Activated CD8-positive, alpha-beta T cell treated with anti-CD3 and anti-CD28 coated beads for 36 hours (primary cell): ENCODE measurements at regions of chr14 and their contacts with region 1.

Region 1: GRCh38 chr14:60349663-60350365 is 100.8 kb downstream of the PPM1A start:
- DNase-seq: peak; percentile 42
- ATAC-seq: no peak
- H3K4me3 Mint-ChIP-seq: no peak overlapping the region
- H3K27ac Mint-ChIP-seq: no peak overlapping the region
- H3K4me1 Mint-ChIP-seq: no peaks in the 10 kb centered on the region
- H3K27me3 Mint-ChIP-seq: peaks cover 2% of the 10 kb centered on the region
- CTCF ChIP-seq: peak; percentile 72

Region 2: GRCh38 chr14:60339571-60339970 is 10.2 kb before region 1 on chr14:
- CTCF ChIA-PET with region 1: interaction called, 14 read pairs
- POLR2A ChIA-PET with region 1: no interaction called
- intact Hi-C with region 1: no loop called
- DNase-seq: no peak
- ATAC-seq: no peak
- H3K4me3 Mint-ChIP-seq: no peak overlapping the region
- H3K27ac Mint-ChIP-seq: no peak overlapping the region
- H3K4me1 Mint-ChIP-seq: no peaks in the 10 kb centered on the region
- H3K27me3 Mint-ChIP-seq: peaks cover 20% of the 10 kb centered on the region
- CTCF ChIP-seq: no peak

Region 3: DNA sequence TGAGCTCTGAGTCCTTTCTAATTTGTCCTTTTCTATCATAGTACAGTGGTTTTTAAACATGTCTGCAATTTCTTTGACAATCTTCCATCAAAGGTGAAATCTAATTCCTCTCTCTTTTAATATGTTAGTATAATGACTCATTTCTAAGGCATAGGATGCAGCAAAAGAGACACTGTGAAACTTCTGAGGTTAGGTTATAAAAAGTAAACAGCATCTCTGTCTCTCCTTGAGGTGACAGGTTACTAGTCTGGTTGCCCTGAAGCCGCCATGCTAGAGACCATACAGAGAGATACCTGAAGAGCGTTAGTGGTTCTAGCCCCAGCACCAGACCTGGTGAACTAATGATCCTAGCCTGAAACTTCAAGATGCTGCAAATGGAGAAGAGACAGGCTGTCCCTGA is 13.5 kb after region 1 on chr14:
- CTCF ChIA-PET with region 1: interaction called, 18 read pairs
- POLR2A ChIA-PET with region 1: no interaction called
- intact Hi-C with region 1: no loop called
- DNase-seq: no peak
- ATAC-seq: no peak
- H3K4me3 Mint-ChIP-seq: no peak overlapping the region
- H3K27ac Mint-ChIP-seq: no peak overlapping the region
- H3K4me1 Mint-ChIP-seq: no peaks in the 10 kb centered on the region
- H3K27me3 Mint-ChIP-seq: peaks cover 13% of the 10 kb centered on the region
- CTCF ChIP-seq: no peak

Region 4: DNA sequence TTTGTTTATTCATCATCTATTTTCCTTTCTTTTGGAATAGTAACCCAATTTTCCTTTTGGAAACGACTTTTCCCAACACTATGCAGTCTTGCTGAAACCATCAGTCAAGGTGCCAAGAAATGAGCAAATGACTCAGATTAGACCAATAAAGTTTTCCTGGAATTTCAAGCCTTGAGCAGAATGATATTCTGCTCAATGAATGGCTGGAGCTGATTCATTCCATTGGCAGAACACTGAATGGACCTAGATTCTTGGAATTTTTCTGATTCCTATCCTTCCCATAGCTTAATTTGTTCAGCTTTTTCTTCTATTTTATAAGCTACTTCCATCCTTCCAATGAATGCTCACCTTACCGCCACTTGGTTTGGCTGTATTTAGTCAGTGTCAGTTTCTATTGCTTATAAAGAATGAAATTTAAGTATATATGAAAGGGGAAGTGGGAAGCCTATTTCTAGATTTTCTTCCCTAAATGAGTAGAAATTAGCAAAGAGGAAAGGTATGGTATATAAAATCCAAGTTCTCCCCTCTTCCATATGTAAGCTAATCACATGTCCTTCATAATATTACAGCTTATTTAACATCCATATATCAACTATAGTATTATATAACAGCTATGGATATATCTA is 47.0 kb after region 1 on chr14:
- CTCF ChIA-PET with region 1: no interaction called
- POLR2A ChIA-PET with region 1: no interaction called
- intact Hi-C with region 1: no loop called
- DNase-seq: no peak
- ATAC-seq: no peak
- H3K4me3 Mint-ChIP-seq: no peak overlapping the region
- H3K27ac Mint-ChIP-seq: no peak overlapping the region
- H3K4me1 Mint-ChIP-seq: no peaks in the 10 kb centered on the region
- H3K27me3 Mint-ChIP-seq: peaks cover 8% of the 10 kb centered on the region
- CTCF ChIP-seq: no peak

Region 5: DNA sequence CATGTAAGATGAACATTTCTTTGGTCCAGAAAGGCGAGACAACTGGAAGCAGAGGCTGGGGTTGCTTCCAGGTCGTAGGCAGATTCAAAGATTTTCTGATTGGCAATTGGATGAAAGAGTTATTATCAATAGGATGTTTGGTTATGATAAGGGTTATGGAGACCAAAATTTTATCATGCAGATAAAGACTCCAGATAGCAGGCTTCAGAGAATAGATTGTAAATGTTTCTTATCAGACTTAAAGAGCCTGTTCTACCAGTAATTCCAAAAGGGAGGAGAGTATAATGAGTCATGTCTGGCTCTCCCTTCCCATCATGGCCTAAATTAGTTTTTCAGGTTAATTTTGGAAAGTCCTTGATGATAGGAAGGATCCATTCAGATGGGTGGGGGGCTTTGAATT is 80.5 kb after region 1 on chr14:
- CTCF ChIA-PET with region 1: no interaction called
- POLR2A ChIA-PET with region 1: no interaction called
- intact Hi-C with region 1: no loop called
- DNase-seq: no peak
- ATAC-seq: no peak
- H3K4me3 Mint-ChIP-seq: no peak overlapping the region
- H3K27ac Mint-ChIP-seq: no peak overlapping the region
- H3K4me1 Mint-ChIP-seq: no peaks in the 10 kb centered on the region
- H3K27me3 Mint-ChIP-seq: no peaks in the 10 kb centered on the region
- CTCF ChIP-seq: no peak

Region 6: GRCh38 chr14:60561845-60562746 is 212.3 kb after region 1 on chr14:
- CTCF ChIA-PET with region 1: interaction called, 24 read pairs
- POLR2A ChIA-PET with region 1: no interaction called
- intact Hi-C with region 1: loop called (anchors 5 kb)
- DNase-seq: peak; percentile 54
- ATAC-seq: no peak
- H3K4me3 Mint-ChIP-seq: no peak overlapping the region
- H3K27ac Mint-ChIP-seq: no peak overlapping the region
- H3K4me1 Mint-ChIP-seq: no peaks in the 10 kb centered on the region
- H3K27me3 Mint-ChIP-seq: peaks cover 3% of the 10 kb centered on the region
- CTCF ChIP-seq: peak; percentile 60

Region 7: DNA sequence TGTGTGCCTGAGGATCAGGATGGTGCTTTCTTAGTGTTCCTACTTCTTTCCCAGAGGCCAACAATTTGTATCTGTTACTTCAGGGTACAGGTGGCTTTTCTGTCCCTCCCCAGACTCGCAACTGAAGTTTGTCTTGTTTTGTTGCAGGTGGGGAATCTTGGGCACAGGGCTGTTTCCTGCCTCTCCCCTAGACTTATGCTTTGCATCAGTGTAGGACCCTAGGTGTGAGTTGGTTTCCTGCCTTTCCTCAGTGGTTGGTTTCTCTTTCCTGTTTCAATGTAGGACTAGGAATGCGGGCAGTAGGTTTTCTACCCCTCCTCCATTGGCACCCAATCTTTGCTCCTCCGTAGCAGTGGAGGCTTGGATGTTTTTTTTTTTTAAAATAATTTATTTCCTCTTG is 544.1 kb after region 1 on chr14:
- CTCF ChIA-PET with region 1: no interaction called
- POLR2A ChIA-PET with region 1: no interaction called
- intact Hi-C with region 1: no loop called
- DNase-seq: no peak
- ATAC-seq: no peak
- H3K4me3 Mint-ChIP-seq: no peak overlapping the region
- H3K27ac Mint-ChIP-seq: no peak overlapping the region
- H3K4me1 Mint-ChIP-seq: peaks cover 17% of the 10 kb centered on the region
- H3K27me3 Mint-ChIP-seq: no peaks in the 10 kb centered on the region
- CTCF ChIP-seq: no peak

Region 8: DNA sequence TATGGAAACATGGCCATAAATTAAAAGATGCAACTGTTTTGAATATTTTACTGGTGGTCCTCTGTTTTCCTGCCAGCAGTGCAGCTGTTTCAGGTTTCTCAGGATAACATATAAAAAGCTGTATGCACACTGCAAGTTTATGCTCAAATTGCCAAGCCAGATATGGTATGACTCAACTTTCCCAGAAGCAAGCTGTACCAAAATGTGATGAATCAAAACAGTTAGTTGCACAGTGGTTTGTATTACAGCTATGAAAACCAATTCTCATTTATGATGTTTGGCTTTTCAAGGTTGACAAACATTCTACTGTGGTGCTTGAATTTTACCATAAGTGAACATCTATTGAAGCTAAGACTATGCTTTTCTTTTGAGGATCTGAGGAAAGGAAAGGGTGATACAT is 615.6 kb after region 1 on chr14:
- CTCF ChIA-PET with region 1: no interaction called
- POLR2A ChIA-PET with region 1: no interaction called
- intact Hi-C with region 1: no loop called
- DNase-seq: no peak
- ATAC-seq: peak; percentile 72
- H3K4me3 Mint-ChIP-seq: no peak overlapping the region
- H3K27ac Mint-ChIP-seq: peak overlapping the region; percentile 83
- H3K4me1 Mint-ChIP-seq: peaks cover 13% of the 10 kb centered on the region
- H3K27me3 Mint-ChIP-seq: no peaks in the 10 kb centered on the region
- CTCF ChIP-seq: no peak

Region 9: GRCh38 chr14:61252369-61253063 is 902.7 kb after region 1 on chr14:
- CTCF ChIA-PET with region 1: interaction called, 14 read pairs
- POLR2A ChIA-PET with region 1: no interaction called
- intact Hi-C with region 1: no loop called
- DNase-seq: peak; percentile 80
- ATAC-seq: peak; percentile 94
- H3K4me3 Mint-ChIP-seq: no peak overlapping the region
- H3K27ac Mint-ChIP-seq: no peak overlapping the region
- H3K4me1 Mint-ChIP-seq: peaks cover 7% of the 10 kb centered on the region
- H3K27me3 Mint-ChIP-seq: peaks cover 10% of the 10 kb centered on the region
- CTCF ChIP-seq: peak; percentile 91